B cell (primary cell): ENCODE measurements at regions of chr4 and their contacts with region 1.

Region 1: DNA sequence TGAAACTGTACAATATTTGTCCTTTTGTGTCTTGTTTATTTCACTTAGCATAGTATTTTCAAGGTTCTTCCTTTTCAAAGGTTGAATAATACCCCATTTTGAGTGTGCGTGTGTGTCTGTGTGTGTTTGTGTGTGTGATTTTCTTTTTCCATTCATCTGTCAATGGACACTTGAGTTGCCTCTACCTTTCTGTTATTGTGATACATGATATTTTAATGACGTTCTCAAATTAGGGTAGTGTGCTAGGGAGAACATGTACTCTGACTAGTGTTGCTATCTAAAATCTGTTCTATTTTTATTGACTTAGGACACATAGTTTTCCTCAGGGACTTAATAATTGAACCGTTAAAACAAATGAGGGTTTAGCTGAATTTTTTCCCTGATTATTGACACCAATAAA is 9.9 kb downstream of the MMRN1 start:
- DNase-seq: no peak
- ATAC-seq: no peak
- H3K4me3 ChIP-seq: no peak overlapping the region
- H3K4me3 Mint-ChIP-seq: no peak overlapping the region
- H3K27ac ChIP-seq: no peak overlapping the region
- H3K27ac Mint-ChIP-seq: no peak overlapping the region
- H3K4me1 ChIP-seq: no peaks in the 10 kb centered on the region
- H3K4me1 Mint-ChIP-seq: no peaks in the 10 kb centered on the region
- H3K27me3 ChIP-seq: peaks cover 0 to 4% (median 0%) of the 10 kb centered on the region in 4 experiments
- H3K27me3 Mint-ChIP-seq: no peaks in the 10 kb centered on the region
- CTCF ChIP-seq: no peak

Region 2: DNA sequence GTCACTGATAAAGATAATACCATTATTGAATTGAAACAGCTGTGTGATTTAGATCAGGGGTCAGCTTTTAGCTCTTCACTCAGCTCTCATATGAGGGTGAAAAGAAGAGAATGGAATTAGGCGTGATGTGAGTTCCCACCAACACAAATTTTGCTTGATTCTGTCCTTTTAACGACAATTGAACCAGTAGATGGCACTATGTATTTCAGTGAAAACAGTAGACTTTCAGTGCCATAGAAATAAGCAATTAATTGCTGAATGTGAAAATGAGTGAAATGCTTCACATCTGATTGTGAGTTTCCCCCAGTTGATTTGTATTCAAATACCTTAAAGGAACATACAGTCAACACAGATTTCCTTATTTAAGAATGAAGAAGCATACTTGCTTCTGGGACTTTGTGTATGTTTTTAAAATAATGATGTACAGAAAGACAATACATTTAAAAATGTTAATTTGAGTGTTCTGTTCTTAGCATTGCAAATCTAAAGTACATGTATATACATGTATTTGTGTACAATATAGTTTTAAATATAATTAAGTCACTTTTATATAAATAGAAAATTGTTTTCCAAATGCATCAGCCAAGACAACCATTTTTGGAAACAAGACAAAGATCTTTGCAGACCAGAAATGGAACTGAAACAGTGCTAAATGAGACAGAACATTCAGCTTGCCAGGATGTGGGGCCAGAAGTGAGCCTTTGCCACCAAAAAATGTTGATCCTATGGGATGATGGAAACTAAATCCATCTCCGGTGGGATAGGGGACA is 246.4 kb before region 1 on chr4:
- CTCF ChIA-PET with region 1: interaction called, 4 read pairs
- POLR2A ChIA-PET with region 1: no interaction called
- intact Hi-C with region 1: loop called (anchors 5 kb)
- DNase-seq: no peak
- ATAC-seq: no peak
- H3K4me3 ChIP-seq: no peak overlapping the region
- H3K4me3 Mint-ChIP-seq: no peak overlapping the region
- H3K27ac ChIP-seq: no peak overlapping the region
- H3K27ac Mint-ChIP-seq: peak overlapping the region; percentile 58
- H3K4me1 ChIP-seq: peaks cover 0 to 4% of the 10 kb centered on the region in 2 donors
- H3K4me1 Mint-ChIP-seq: peaks cover 8% of the 10 kb centered on the region
- H3K27me3 ChIP-seq: no peaks in the 10 kb centered on the region
- H3K27me3 Mint-ChIP-seq: peaks cover 7% of the 10 kb centered on the region
- CTCF ChIP-seq: no peak

Region 3: DNA sequence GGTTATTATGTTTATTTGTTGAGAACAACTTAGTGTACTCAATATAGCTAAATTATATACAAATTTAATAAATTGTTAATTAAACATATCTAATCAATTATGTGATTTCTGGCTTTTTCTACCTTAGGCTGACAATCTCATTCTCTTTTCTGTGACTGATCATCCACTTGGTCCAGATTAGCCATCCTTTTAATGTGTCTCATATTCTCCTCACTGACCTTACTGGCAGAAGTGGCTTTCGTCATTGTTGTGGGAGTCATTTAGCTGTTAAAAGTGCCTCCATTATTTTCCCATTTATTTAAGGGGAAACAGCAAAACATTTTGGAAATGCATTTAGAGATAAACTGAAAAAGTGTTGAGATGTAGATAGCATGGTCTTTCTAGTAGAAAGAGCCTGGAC is 394.8 kb after region 1 on chr4:
- CTCF ChIA-PET with region 1: no interaction called
- POLR2A ChIA-PET with region 1: no interaction called
- intact Hi-C with region 1: no loop called
- DNase-seq: no peak
- ATAC-seq: no peak
- H3K4me3 ChIP-seq: no peak overlapping the region
- H3K4me3 Mint-ChIP-seq: no peak overlapping the region
- H3K27ac ChIP-seq: no peak overlapping the region
- H3K27ac Mint-ChIP-seq: no peak overlapping the region
- H3K4me1 ChIP-seq: no peaks in the 10 kb centered on the region
- H3K4me1 Mint-ChIP-seq: no peaks in the 10 kb centered on the region
- H3K27me3 ChIP-seq: no peaks in the 10 kb centered on the region
- H3K27me3 Mint-ChIP-seq: no peaks in the 10 kb centered on the region
- CTCF ChIP-seq: no peak

Region 4: GRCh38 chr4:90537491-90537890 is 633.0 kb after region 1 on chr4:
- CTCF ChIA-PET with region 1: no interaction called
- POLR2A ChIA-PET with region 1: no interaction called
- intact Hi-C with region 1: no loop called
- DNase-seq: no peak
- ATAC-seq: no peak
- H3K4me3 ChIP-seq: no peak overlapping the region
- H3K4me3 Mint-ChIP-seq: no peak overlapping the region
- H3K27ac ChIP-seq: no peak overlapping the region
- H3K27ac Mint-ChIP-seq: no peak overlapping the region
- H3K4me1 ChIP-seq: no peaks in the 10 kb centered on the region
- H3K4me1 Mint-ChIP-seq: no peaks in the 10 kb centered on the region
- H3K27me3 ChIP-seq: no peaks in the 10 kb centered on the region
- H3K27me3 Mint-ChIP-seq: no peaks in the 10 kb centered on the region
- CTCF ChIP-seq: no peak